Caco-2 (cell line): ENCODE measurements at regions of chr6 and their contacts with region 1.

Region 1: DNA sequence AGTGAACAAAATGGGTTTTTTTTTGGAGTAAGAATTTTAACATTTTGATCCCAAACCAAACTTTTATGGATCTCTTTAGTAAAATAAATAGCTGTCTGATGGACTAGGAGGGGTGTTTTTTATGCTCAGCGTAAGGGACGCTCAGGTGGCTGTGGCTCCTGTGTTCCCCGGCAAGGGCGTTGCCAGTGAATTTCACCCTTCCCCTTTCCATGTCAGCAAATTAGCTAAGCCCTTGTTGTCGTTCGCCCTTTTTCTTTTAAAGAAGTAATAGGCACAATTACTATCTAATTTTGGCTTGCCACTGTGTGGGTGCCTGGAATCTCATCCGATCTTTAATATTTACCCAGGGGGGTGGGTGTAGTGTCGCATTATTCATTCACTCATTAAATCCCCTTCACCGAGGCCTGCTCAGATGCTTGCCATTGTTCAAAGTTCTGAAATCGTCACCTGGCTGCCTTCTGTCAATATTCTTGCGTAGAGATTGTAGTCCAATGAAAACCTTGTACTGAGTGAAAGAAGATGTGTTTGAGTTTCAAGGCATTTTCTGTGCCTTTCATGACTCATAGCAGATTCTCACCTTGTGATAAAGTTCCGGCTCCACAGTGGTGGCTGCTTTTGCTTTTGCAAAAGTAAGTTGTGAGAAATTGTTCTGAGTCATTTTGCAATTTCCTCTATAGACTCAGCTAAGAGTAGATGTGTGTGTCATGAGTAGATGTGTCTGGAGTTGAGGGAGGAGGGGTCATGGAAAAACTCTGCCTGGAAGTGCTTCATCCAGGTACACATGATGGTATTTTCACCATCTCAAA is 40.0 kb upstream of the CLDN20 start:
- DNase-seq: peak; percentile 58 to 67
- H3K4me3 ChIP-seq: peak overlapping the region; percentile 29
- H3K4me3 Mint-ChIP-seq: peak overlapping the region; percentile 65
- H3K27ac Mint-ChIP-seq: peak overlapping the region; percentile 93
- H3K4me1 ChIP-seq: peaks cover 17% of the 10 kb centered on the region
- H3K4me1 Mint-ChIP-seq: peaks cover 19% of the 10 kb centered on the region
- H3K27me3 ChIP-seq: no peaks in the 10 kb centered on the region
- H3K27me3 Mint-ChIP-seq: no peaks in the 10 kb centered on the region
- CTCF ChIP-seq: no peak

Region 2: GRCh38 chr6:155185544-155185943 is 38.3 kb before region 1 on chr6:
- CTCF ChIA-PET with region 1: no interaction called
- POLR2A ChIA-PET with region 1: interaction called, 4 read pairs
- intact Hi-C with region 1: loop called (anchors 1 kb)
- DNase-seq: peak; percentile 75 to 76
- H3K4me3 ChIP-seq: no peak overlapping the region
- H3K4me3 Mint-ChIP-seq: no peak overlapping the region
- H3K27ac Mint-ChIP-seq: peak overlapping the region; percentile 39
- H3K4me1 ChIP-seq: peaks cover 6% of the 10 kb centered on the region; the same call in 1 of the 2 replicates
- H3K4me1 Mint-ChIP-seq: peaks cover 13% of the 10 kb centered on the region
- H3K27me3 ChIP-seq: no peaks in the 10 kb centered on the region
- H3K27me3 Mint-ChIP-seq: no peaks in the 10 kb centered on the region
- CTCF ChIP-seq: no peak

Region 3: DNA sequence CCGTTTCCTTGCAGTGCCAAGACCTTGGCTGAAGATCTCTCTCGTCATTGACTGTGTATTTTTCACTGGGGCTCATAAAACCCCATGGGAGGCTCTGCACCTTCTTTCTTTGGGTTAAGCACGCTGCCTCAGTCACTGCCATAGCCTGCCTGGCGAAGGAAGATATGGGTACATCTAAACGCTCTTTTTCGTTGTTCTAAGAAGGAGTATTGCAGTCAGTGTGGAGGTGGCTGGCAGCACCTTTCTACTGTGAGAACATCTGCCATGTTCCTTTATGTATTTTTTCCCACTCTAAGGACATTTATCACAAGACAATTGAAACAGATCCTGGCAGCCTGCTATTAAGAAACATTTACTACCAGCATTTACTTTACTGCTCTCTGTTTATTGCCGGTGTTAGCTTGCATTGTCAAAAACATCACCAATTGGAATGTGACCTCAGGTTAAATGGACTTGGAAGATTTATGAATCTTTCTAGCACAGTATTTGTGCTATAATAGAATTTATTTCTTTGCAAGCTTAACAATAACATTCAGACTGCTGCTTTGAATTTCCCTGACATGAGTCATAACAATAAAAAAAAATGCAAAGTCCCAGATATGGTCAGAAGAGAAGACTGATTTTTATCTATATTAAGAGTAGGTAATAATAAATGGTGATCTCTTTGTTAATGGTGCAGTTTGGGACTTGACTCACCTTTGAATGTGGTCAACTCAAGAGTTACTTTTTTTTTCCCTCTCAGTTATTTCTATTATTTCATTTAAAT is 22.2 kb before region 1 on chr6:
- CTCF ChIA-PET with region 1: no interaction called
- POLR2A ChIA-PET with region 1: no interaction called
- intact Hi-C with region 1: loop called (anchors 1 kb)
- DNase-seq: peak in 1 of 2 experiments; percentile 46
- H3K4me3 ChIP-seq: no peak overlapping the region
- H3K4me3 Mint-ChIP-seq: no peak overlapping the region
- H3K27ac Mint-ChIP-seq: peak overlapping the region; percentile 47
- H3K4me1 ChIP-seq: peaks cover 25% of the 10 kb centered on the region
- H3K4me1 Mint-ChIP-seq: peaks cover 13% of the 10 kb centered on the region
- H3K27me3 ChIP-seq: no peaks in the 10 kb centered on the region
- H3K27me3 Mint-ChIP-seq: no peaks in the 10 kb centered on the region
- CTCF ChIP-seq: no peak

Region 4: DNA sequence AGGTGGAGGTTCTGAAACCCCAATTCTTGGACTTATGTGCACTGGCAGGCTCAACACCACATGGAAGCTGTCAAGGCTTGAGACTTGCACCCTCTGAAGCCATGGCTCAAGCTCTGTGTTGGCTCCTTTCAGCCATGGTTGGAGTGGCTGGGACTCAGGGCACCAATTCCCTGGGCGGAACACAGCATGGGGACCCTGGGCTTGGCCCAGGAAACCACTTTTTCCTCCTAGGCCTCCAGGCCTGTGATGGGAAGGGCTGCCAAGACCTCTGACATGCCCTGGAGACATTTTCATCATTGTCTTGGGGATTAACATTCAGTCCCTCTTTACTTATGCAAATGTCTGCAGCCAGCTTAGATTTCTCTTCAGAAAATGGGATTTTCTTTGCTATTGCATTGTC is 13.8 kb after region 1 on chr6:
- CTCF ChIA-PET with region 1: no interaction called
- POLR2A ChIA-PET with region 1: interaction called, 11 read pairs
- intact Hi-C with region 1: no loop called
- DNase-seq: no peak
- H3K4me3 ChIP-seq: no peak overlapping the region
- H3K4me3 Mint-ChIP-seq: no peak overlapping the region
- H3K27ac Mint-ChIP-seq: no peak overlapping the region
- H3K4me1 ChIP-seq: no peaks in the 10 kb centered on the region
- H3K4me1 Mint-ChIP-seq: no peaks in the 10 kb centered on the region
- H3K27me3 ChIP-seq: no peaks in the 10 kb centered on the region
- H3K27me3 Mint-ChIP-seq: no peaks in the 10 kb centered on the region
- CTCF ChIP-seq: no peak

Region 5: GRCh38 chr6:155248008-155249001 is 24.5 kb after region 1 on chr6:
- CTCF ChIA-PET with region 1: no interaction called
- POLR2A ChIA-PET with region 1: interaction called, 3 read pairs
- intact Hi-C with region 1: loop called (anchors 1 kb)
- DNase-seq: peak; percentile 54 to 55
- H3K4me3 ChIP-seq: no peak overlapping the region
- H3K4me3 Mint-ChIP-seq: no peak overlapping the region
- H3K27ac Mint-ChIP-seq: peak overlapping the region; percentile 69
- H3K4me1 ChIP-seq: peaks cover 21% of the 10 kb centered on the region
- H3K4me1 Mint-ChIP-seq: peaks cover 11% of the 10 kb centered on the region
- H3K27me3 ChIP-seq: no peaks in the 10 kb centered on the region
- H3K27me3 Mint-ChIP-seq: no peaks in the 10 kb centered on the region
- CTCF ChIP-seq: peak; percentile 53 to 66